Left colon (tissue), 2 donors: ENCODE measurements at regions of chr2 and their contacts with region 1.

Region 1: DNA sequence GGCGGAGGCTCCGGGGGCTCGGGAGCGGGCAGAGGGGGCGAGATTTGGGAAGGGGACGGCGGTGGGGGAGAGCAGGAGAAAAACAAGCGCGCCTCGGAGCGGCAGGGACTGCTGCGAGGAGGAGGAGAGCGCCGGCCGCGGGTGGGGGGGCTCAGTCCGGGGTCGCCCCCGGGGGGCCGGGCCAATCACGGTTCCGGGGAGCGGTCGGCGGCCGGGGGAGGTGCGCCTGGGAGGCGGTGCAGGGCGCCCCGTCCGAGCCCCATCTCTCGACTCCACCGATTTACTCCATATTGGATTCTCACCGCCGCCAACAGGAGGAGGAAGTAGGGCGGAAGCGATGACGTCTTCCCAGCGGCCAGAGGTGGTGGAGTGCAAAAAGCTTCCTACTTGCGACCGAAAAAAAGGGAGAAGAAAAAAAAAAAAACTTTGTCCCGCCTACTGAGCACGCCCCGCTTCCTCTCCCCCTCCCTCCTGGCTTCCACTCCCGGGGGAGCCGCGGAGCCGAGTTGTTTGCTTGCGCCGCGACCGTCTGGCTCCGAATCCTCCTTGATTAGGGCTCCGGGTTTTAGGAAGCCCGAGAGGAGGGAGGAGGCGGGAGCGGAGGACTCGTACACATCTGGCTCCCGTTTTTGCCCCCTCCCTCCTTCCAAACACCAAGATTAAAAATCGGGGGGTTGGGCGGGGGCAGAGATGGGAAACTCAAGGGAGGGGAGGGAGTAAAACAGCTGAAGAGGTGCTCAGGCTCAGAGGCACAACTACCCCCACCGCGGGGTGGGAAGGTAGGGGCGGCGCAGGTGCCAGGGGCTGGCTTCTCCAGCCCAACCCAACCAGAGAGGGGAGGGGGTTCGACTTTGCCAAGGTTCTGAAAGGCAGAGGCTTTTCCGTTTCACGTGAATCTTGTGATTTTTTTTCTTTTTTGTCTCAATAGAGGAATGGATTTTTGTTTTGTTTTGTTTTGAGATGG is at the start of gene SPRED2:
- DNase-seq: peak; percentile 90
- ATAC-seq: peak; percentile 60
- total RNA-seq, gene SPRED2: 41.5 to 57.0 TPM

Region 2: GRCh38 chr2:65264821-65265670 is 167.5 kb before region 1 on chr2:
- intact Hi-C with region 1: loop called in 1 of 2 experiments (anchors 10 kb)
- DNase-seq: no peak
- ATAC-seq: peak; percentile 88

Region 3: GRCh38 chr2:65530547-65531320 is 98.2 kb after region 1 on chr2:
- intact Hi-C with region 1: no loop called
- DNase-seq: no peak
- ATAC-seq: no peak

Region 4: GRCh38 chr2:65554765-65555591 is 122.5 kb after region 1 on chr2:
- intact Hi-C with region 1: no loop called
- DNase-seq: no peak
- ATAC-seq: no peak